ENCODE measurements at regions of chr4 and their contacts with region 1.

Region 1: GRCh38 chr4:83180431-83180968 is 66.0 kb upstream of the PLAC8 start:
- DNase-seq: peak in 1 of 9 experiments; percentile 8
- ATAC-seq: no peak
- H3K4me3 ChIP-seq: no peak overlapping the region
- H3K4me3 Mint-ChIP-seq: no peak overlapping the region
- H3K27ac ChIP-seq: no peak overlapping the region
- H3K27ac Mint-ChIP-seq: no peak overlapping the region
- H3K4me1 ChIP-seq: no peaks in the 10 kb centered on the region
- H3K4me1 Mint-ChIP-seq: peaks cover 5% of the 10 kb centered on the region
- H3K27me3 ChIP-seq: no peaks in the 10 kb centered on the region
- H3K27me3 Mint-ChIP-seq: no peaks in the 10 kb centered on the region
- CTCF ChIP-seq: no peak

Region 2: DNA sequence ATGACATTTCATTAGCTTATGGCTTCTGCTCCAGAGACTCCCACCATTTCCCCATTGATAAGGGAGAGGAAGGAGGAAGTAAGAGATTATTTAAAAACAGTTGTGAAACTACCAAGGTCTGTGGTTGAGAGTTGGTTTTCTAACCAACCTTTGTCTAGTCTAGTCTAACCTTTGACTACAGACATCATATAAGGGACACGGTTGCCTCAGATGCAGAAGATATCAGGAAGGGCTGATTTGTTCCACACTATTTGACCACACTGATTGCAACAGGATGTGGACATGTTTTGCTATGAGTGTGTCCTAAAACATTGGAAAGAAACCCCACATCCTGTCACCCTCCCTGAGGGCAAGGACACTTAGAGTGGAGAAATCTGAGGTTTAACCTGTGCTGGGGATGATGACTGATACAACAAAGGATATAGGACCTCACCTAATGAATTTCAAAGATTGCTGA is 51.1 kb after region 1 on chr4:
- CTCF ChIA-PET with region 1: no interaction called
- POLR2A ChIA-PET with region 1: no interaction called
- intact Hi-C with region 1: loop called in 1 of 2 experiments (anchors 10 kb)
- DNase-seq: peak in 3 of 9 experiments; percentile 14 to 51 (median 17)
- ATAC-seq: peak; percentile 62
- H3K4me3 ChIP-seq: no peak overlapping the region
- H3K4me3 Mint-ChIP-seq: no peak overlapping the region
- H3K27ac ChIP-seq: no peak overlapping the region
- H3K27ac Mint-ChIP-seq: peak overlapping the region; percentile 19
- H3K4me1 ChIP-seq: peaks cover 40% of the 10 kb centered on the region
- H3K4me1 Mint-ChIP-seq: peaks cover 46% of the 10 kb centered on the region
- H3K27me3 ChIP-seq: no peaks in the 10 kb centered on the region
- H3K27me3 Mint-ChIP-seq: no peaks in the 10 kb centered on the region
- CTCF ChIP-seq: no peak